Activated CD8-positive, alpha-beta memory T cell treated with anti-CD3 and anti-CD28 coated beads, Interleukin-2, amount 10 ng/mL, durations not matched to agents 7 days and 5 days (primary cell): ENCODE measurements at regions of chr15 and their contacts with region 1.

Region 1: GRCh38 chr15:57340682-57341259 is 35.5 kb upstream of the CGNL1 start:
- DNase-seq: no peak
- ATAC-seq: no peak
- H3K4me3 Mint-ChIP-seq: no peak overlapping the region
- H3K27ac Mint-ChIP-seq: no peak overlapping the region
- H3K4me1 Mint-ChIP-seq: no peaks in the 10 kb centered on the region
- H3K27me3 Mint-ChIP-seq: peaks cover 3% of the 10 kb centered on the region

Region 2: GRCh38 chr15:57527382-57528091 is 186.8 kb after region 1 on chr15:
- CTCF ChIA-PET with region 1: interaction called, 66 read pairs
- DNase-seq: no peak
- ATAC-seq: peak; percentile 9
- H3K4me3 Mint-ChIP-seq: no peak overlapping the region
- H3K27ac Mint-ChIP-seq: no peak overlapping the region
- H3K4me1 Mint-ChIP-seq: no peaks in the 10 kb centered on the region
- H3K27me3 Mint-ChIP-seq: peaks cover 47% of the 10 kb centered on the region

Region 3: GRCh38 chr15:57541805-57542504 is 201.2 kb after region 1 on chr15:
- CTCF ChIA-PET with region 1: interaction called, 20 read pairs
- DNase-seq: peak; percentile 50
- ATAC-seq: no peak
- H3K4me3 Mint-ChIP-seq: no peak overlapping the region
- H3K27ac Mint-ChIP-seq: no peak overlapping the region
- H3K4me1 Mint-ChIP-seq: no peaks in the 10 kb centered on the region
- H3K27me3 Mint-ChIP-seq: peaks cover 10% of the 10 kb centered on the region